OCI-LY7 (cell line): ENCODE measurements at regions of chr14 and their contacts with region 1.

Region 1: GRCh38 chr14:69460093-69460701 is 24.3 kb upstream of the PLEKHD1 start:
- DNase-seq: peak; percentile 79
- H3K4me3 ChIP-seq: no peak overlapping the region
- H3K27ac ChIP-seq: no peak overlapping the region
- H3K4me1 ChIP-seq: no peaks in the 10 kb centered on the region
- CTCF ChIP-seq: peak; percentile 95

Region 2: GRCh38 chr14:69260861-69261564 is 199.2 kb before region 1 on chr14:
- CTCF ChIA-PET with region 1: no interaction called
- POLR2A ChIA-PET with region 1: no interaction called
- intact Hi-C with region 1: loop called (anchors 1 kb)
- DNase-seq: peak; percentile 55
- H3K4me3 ChIP-seq: no peak overlapping the region
- H3K27ac ChIP-seq: no peak overlapping the region
- H3K4me1 ChIP-seq: peaks cover 13% of the 10 kb centered on the region
- CTCF ChIP-seq: peak; percentile 76

Region 3: GRCh38 chr14:69354383-69355153 is 105.6 kb before region 1 on chr14:
- CTCF ChIA-PET with region 1: no interaction called
- POLR2A ChIA-PET with region 1: no interaction called
- intact Hi-C with region 1: loop called (anchors 1 kb)
- DNase-seq: peak; percentile 86
- H3K4me3 ChIP-seq: peak overlapping the region; percentile 46
- H3K27ac ChIP-seq: peak overlapping the region; percentile 63
- H3K4me1 ChIP-seq: peaks cover 34% of the 10 kb centered on the region
- CTCF ChIP-seq: no peak

Region 4: DNA sequence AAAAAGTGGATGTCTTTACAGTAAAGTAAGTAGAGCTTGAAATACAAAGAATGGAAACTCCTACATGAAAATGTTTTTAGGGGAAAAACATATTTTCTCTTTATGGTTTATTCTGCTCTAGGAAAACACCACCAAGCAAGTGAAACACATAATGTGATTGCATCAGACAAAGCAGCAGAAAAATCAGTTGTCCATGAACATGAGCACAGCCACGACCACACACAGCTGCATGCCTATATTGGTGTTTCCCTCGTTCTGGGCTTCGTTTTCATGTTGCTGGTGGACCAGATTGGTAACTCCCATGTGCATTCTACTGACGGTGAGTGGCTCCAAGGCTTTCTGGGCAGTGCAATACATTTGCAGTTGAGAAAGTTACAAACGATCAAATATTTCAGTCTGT is 18.2 kb before region 1 on chr14:
- CTCF ChIA-PET with region 1: no interaction called
- POLR2A ChIA-PET with region 1: interaction called, 10 read pairs
- intact Hi-C with region 1: no loop called
- DNase-seq: peak; percentile 88
- H3K4me3 ChIP-seq: peak overlapping the region; percentile 24
- H3K27ac ChIP-seq: peak overlapping the region; percentile 85
- H3K4me1 ChIP-seq: peaks cover 28% of the 10 kb centered on the region
- CTCF ChIP-seq: no peak